BJ (cell line): ENCODE measurements at regions of chr6 and their contacts with region 1.

Region 1: DNA sequence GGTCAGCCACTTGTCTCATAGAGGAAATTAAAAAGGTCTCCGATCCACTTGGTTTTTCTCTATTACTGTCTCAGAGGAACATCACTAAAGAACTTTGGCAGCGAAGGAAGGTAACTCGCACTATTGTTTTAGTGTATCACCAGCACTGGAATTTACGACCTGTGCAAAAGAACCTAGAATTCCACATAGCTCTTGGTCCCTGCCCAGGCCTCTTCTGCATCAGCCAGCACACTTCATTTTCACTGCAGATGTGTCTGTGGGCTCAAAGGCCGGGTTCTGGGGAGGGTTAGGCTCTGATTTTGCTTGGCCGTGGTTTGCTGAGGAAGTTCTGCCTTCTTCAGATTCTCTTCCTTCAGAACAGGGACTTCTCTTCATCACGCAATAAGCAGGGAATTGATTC is 102.8 kb upstream of the TMEM181 start:
- DNase-seq: no peak
- H3K4me3 ChIP-seq: no peak overlapping the region
- H3K27me3 ChIP-seq: no peaks in the 10 kb centered on the region
- CTCF ChIP-seq: no peak

Region 2: GRCh38 chr6:158122048-158122447 is 335.1 kb before region 1 on chr6:
- CTCF ChIA-PET with region 1: no interaction called
- POLR2A ChIA-PET with region 1: no interaction called
- DNase-seq: no peak
- H3K4me3 ChIP-seq: no peak overlapping the region
- H3K27me3 ChIP-seq: no peaks in the 10 kb centered on the region
- CTCF ChIP-seq: no peak

Region 3: GRCh38 chr6:158284007-158284875 is 172.9 kb before region 1 on chr6:
- CTCF ChIA-PET with region 1: no interaction called
- POLR2A ChIA-PET with region 1: no interaction called
- DNase-seq: peak; percentile 46
- H3K4me3 ChIP-seq: no peak overlapping the region
- H3K27me3 ChIP-seq: no peaks in the 10 kb centered on the region
- CTCF ChIP-seq: no peak

Region 4: DNA sequence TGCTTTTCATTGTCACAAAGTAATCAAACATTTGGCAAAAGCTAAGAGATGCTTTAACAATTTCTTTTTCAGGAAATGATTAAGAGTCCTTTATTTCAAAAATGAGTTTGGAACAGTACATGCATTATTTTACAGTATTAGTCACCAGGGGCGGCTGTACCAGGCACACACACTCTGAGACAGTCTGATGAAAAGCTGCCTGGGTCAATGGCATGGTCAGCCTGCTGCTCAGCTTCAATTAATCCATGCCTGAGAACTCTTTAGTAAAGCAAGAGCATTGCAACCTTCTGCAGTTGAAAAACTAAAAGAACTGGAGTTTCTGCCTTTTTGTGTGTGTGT is 39.4 kb before region 1 on chr6:
- CTCF ChIA-PET with region 1: no interaction called
- POLR2A ChIA-PET with region 1: interaction called, 20 read pairs
- DNase-seq: peak; percentile 22
- H3K4me3 ChIP-seq: no peak overlapping the region
- H3K27me3 ChIP-seq: no peaks in the 10 kb centered on the region
- CTCF ChIP-seq: no peak